K562 (cell line): ENCODE measurements at regions of chr2 and their contacts with region 1.

Region 1: GRCh38 chr2:23926750-23927571 is at the start of gene ATAD2B:
- DNase-seq: peak; percentile 94 to 96 (median 94)
- ATAC-seq: peak; percentile 92
- H3K4me3 ChIP-seq: peak within 1 kb of the TSS; percentile 86
- H3K27ac ChIP-seq: peak within 1 kb of the TSS; percentile 96
- H3K4me1 ChIP-seq: peaks cover 3 to 21% of the 10 kb centered on the region in 2 experiments; a peak in 2 of 5 replicates
- H3K27me3 ChIP-seq: no peaks in the 10 kb centered on the region
- CTCF ChIP-seq: peak; percentile 92 to 96 (median 95)
- EP300 ChIP-seq: peak; percentile 37
- POLR2A ChIP-seq: peak; percentile 91
- RAD21 ChIP-seq: peak; percentile 85 to 86
- polyA plus RNA-seq, gene ATAD2B: 3.2 to 4.0 TPM

Region 2: DNA sequence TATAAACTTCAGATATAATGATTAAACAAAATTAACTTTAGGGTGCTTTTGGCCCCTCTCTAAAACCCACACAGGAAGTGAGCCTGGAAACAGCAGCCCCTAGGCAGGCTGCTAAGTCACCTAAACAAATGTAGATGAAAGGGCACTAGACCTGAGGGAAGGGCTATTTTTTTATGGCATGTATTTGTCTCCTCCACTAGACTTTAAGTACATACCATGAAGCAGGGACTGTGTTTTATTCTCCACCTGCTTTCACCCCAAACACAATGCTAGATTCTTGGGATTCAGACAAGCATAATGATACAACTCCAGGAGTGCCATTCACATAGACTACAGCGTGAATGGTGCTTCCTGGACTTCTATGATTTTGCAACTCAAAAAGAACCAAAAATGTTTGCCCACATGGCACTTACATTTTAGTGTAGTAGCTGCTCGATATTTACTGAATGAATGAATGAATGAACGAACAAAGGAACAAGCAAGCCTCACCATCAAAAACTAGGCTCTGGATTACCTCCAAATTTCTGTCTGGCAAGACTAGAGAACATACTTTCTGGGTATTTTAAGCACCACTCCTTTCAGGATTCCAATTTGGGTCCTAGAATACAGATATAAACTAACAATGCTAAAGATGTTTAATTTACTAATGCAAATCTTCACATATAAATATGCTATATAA is 10.1 kb before region 1 on chr2:
- CTCF ChIA-PET with region 1: no interaction called
- POLR2A ChIA-PET with region 1: interaction called, 16 read pairs
- in situ Hi-C with region 1: no loop called
- intact Hi-C with region 1: no loop called
- DNase-seq: peak in 2 of 4 experiments; percentile 42 to 53
- ATAC-seq: peak; percentile 75
- H3K4me3 ChIP-seq: no peak overlapping the region
- H3K27ac ChIP-seq: peak overlapping the region; percentile 50
- H3K4me1 ChIP-seq: peaks cover 0 to 12% of the 10 kb centered on the region in 2 experiments; a peak in 3 of 5 replicates
- H3K27me3 ChIP-seq: no peaks in the 10 kb centered on the region
- CTCF ChIP-seq: no peak
- EP300 ChIP-seq: no peak
- POLR2A ChIP-seq: no peak
- RAD21 ChIP-seq: no peak

Region 3: DNA sequence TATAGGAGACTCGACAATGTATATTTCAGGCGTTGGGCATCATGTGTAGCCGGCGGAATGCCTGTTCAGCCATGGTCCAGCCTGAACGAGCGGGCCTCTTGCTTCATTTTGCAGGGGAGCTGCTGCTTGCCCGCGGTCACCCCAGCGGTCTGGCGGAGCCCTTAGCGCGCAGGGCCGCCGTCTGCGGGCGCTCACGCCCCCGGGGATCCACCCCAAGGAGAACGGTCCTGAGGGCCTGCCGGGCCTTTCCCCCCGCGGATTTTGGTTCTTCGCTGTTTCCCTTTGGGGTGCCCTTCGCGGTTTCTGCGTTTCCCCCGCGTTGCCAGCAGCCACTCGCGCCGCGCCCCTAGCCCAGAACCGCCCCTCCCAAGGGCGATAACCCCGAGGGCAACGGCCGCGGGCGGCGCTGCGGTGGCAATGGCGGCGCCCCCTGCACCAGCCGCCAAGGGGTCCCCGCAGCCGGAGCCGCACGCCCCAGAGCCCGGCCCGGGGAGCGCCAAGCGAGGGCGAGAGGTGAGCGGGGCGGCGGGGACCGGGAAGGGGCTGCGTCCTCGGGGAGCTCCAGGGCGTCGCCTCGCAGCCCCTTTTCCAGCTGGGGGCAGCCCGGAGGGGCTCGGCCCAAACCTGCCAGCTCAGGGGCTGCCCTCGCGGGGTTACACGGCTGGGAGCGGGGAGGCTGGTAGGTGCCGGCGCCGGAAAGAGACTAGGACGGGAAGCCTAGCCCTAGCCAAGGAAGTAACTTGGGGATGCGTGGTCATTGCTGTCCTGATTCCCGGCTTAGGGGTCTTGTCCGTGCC is 82.9 kb after region 1 on chr2 and contains the start of gene MFSD2B:
- CTCF ChIA-PET with region 1: no interaction called
- POLR2A ChIA-PET with region 1: interaction called, 14 read pairs
- in situ Hi-C with region 1: no loop called
- intact Hi-C with region 1: loop called (anchors 1 kb)
- DNase-seq: peak; percentile 53 to 75 (median 71)
- ATAC-seq: peak; percentile 45
- H3K4me3 ChIP-seq: peak within 1 kb of the TSS; percentile 60
- H3K27ac ChIP-seq: peak within 1 kb of the TSS; percentile 99
- H3K4me1 ChIP-seq: peaks cover 34 to 43% of the 10 kb centered on the region in 2 experiments
- H3K27me3 ChIP-seq: no peaks in the 10 kb centered on the region
- CTCF ChIP-seq: no peak
- EP300 ChIP-seq: no peak
- POLR2A ChIP-seq: no peak
- RAD21 ChIP-seq: no peak
- polyA plus RNA-seq, gene MFSD2B: 2.6 to 3.6 TPM

Region 4: DNA sequence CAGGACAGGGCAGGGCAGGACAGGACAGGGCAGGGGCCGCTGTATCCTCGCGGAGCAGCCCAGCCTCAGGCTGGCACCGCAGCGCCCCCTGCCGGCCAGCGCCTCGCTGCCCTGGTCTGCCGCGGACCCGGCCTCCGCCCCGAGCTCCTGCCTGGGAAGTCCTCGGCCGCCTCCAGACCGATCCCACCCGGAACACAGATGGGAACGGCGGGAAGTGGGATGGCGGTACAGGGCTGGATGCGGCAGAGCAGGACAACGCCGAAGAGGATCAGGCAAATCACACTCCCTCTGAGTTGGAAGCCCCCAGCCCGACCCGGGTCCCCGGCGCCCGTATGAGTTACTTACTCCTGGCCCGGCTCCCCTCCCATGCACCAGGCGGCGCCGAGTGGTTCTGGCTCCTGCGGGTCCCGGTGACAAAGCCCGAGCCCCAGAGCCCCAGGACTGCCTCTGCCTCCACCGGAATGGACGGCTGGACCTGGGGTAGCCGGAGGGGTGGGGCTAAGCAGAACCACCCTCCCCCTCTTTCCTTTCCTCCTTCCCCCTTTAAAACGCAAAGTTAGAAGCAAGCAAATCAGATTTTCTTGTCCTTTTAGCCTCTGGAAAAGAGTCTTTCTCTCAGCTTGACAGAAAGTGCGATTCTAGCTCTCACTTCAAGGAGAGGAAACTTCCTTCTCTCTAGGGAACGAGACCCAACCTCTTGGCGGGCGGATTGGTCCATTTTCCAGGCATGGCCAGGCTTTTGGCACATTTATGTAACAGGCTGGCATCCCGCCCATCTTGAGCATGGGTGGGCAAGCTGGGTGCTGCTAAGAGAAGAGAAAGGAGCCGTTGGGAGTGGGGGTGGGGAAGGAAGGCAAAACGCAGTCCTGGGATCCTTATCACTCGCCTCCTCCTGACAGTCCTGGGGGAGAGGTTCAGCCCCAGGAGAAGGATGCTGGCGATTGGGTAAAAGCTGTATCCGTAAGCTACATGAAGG is 157.7 kb after region 1 on chr2 and contains the start of gene TP53I3:
- CTCF ChIA-PET with region 1: interaction called, 10 read pairs
- POLR2A ChIA-PET with region 1: interaction called, 12 read pairs
- in situ Hi-C with region 1: no loop called
- intact Hi-C with region 1: loop called (anchors 2 kb)
- DNase-seq: peak; percentile 90 to 95 (median 92)
- ATAC-seq: peak; percentile 95
- H3K4me3 ChIP-seq: peak within 1 kb of the TSS; percentile 58
- H3K27ac ChIP-seq: peak within 1 kb of the TSS; percentile 75
- H3K4me1 ChIP-seq: peaks cover 12 to 18% of the 10 kb centered on the region in 2 experiments; a peak in 4 of 5 replicates
- H3K27me3 ChIP-seq: no peaks in the 10 kb centered on the region
- CTCF ChIP-seq: peak; percentile 85 to 95 (median 86)
- EP300 ChIP-seq: peak; percentile 16; the same call in 1 of the 2 replicates
- POLR2A ChIP-seq: peak; percentile 81
- RAD21 ChIP-seq: peak; percentile 80 to 83
- polyA plus RNA-seq, gene TP53I3: 0.65 to 1.3 TPM

Region 5: GRCh38 chr2:24342110-24342910 is 415.3 kb after region 1 on chr2:
- CTCF ChIA-PET with region 1: no interaction called
- POLR2A ChIA-PET with region 1: no interaction called
- in situ Hi-C with region 1: no loop called
- intact Hi-C with region 1: no loop called
- DNase-seq: no peak
- ATAC-seq: peak; percentile 16; the same call in 1 of the 3 replicates
- H3K4me3 ChIP-seq: no peak overlapping the region
- H3K27ac ChIP-seq: no peak overlapping the region
- H3K4me1 ChIP-seq: peaks cover 0 to 24% of the 10 kb centered on the region in 2 experiments; a peak in 3 of 5 replicates
- H3K27me3 ChIP-seq: no peaks in the 10 kb centered on the region
- CTCF ChIP-seq: no peak
- EP300 ChIP-seq: no peak
- POLR2A ChIP-seq: no peak
- RAD21 ChIP-seq: no peak